Caco-2 (cell line): ENCODE measurements at regions of chr3 and their contacts with region 1.

Region 1: GRCh38 chr3:141561426-141562034 is 74.7 kb downstream of the RASA2 start:
- DNase-seq: peak in 1 of 2 experiments; percentile 69
- H3K4me3 ChIP-seq: no peak overlapping the region
- H3K4me3 Mint-ChIP-seq: no peak overlapping the region
- H3K27ac Mint-ChIP-seq: no peak overlapping the region
- H3K4me1 ChIP-seq: peaks cover 8% of the 10 kb centered on the region
- H3K4me1 Mint-ChIP-seq: no peaks in the 10 kb centered on the region
- H3K27me3 ChIP-seq: no peaks in the 10 kb centered on the region
- H3K27me3 Mint-ChIP-seq: no peaks in the 10 kb centered on the region
- CTCF ChIP-seq: peak; percentile 87 to 96

Region 2: GRCh38 chr3:141303481-141304223 is 257.9 kb before region 1 on chr3:
- CTCF ChIA-PET with region 1: no interaction called
- POLR2A ChIA-PET with region 1: no interaction called
- intact Hi-C with region 1: loop called (anchors 2 kb)
- DNase-seq: peak; percentile 56 to 77
- H3K4me3 ChIP-seq: no peak overlapping the region
- H3K4me3 Mint-ChIP-seq: no peak overlapping the region
- H3K27ac Mint-ChIP-seq: no peak overlapping the region
- H3K4me1 ChIP-seq: no peaks in the 10 kb centered on the region; the same call in 1 of the 2 replicates
- H3K4me1 Mint-ChIP-seq: no peaks in the 10 kb centered on the region
- H3K27me3 ChIP-seq: no peaks in the 10 kb centered on the region
- H3K27me3 Mint-ChIP-seq: no peaks in the 10 kb centered on the region
- CTCF ChIP-seq: peak; percentile 61 to 68

Region 3: GRCh38 chr3:141360888-141361598 is 200.5 kb before region 1 on chr3:
- CTCF ChIA-PET with region 1: interaction called, 4 read pairs
- POLR2A ChIA-PET with region 1: no interaction called
- intact Hi-C with region 1: loop called (anchors 2 kb)
- DNase-seq: peak; percentile 87 to 88
- H3K4me3 ChIP-seq: no peak overlapping the region
- H3K4me3 Mint-ChIP-seq: no peak overlapping the region
- H3K27ac Mint-ChIP-seq: peak overlapping the region; percentile 87
- H3K4me1 ChIP-seq: peaks cover 25% of the 10 kb centered on the region
- H3K4me1 Mint-ChIP-seq: peaks cover 26% of the 10 kb centered on the region
- H3K27me3 ChIP-seq: no peaks in the 10 kb centered on the region
- H3K27me3 Mint-ChIP-seq: no peaks in the 10 kb centered on the region
- CTCF ChIP-seq: peak; percentile 56 to 76

Region 4: DNA sequence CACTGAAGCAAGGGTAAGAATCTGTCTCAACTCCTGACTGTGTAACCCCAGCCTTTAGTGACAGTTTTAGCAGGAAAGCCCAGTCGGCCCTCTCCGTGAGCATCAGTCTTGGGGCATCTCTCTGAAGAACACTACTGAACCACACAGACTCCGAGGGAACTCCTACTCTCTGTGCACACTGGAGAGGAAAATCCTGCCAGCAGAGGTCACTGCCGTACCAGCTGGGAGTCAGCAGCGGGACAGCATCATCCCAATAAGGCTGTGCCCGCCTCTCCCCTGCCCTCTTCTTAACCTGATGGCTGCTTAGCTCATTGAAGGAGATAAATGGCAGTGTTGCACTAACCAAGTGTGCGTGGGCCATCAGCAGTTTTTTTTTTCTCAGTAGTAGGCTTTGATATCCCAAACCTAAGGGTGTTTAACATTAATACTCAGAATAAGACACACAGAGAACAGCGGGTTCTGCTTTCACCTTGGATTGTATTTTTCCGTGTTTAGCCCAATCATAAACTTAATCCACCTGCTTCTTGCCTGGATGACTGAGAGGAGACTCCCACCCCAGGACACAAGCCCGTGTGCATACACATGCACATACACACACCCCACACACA is 101.3 kb before region 1 on chr3:
- CTCF ChIA-PET with region 1: interaction called, 14 read pairs
- POLR2A ChIA-PET with region 1: no interaction called
- intact Hi-C with region 1: loop called (anchors 1 kb)
- DNase-seq: peak; percentile 86 to 91
- H3K4me3 ChIP-seq: no peak overlapping the region
- H3K4me3 Mint-ChIP-seq: no peak overlapping the region
- H3K27ac Mint-ChIP-seq: no peak overlapping the region
- H3K4me1 ChIP-seq: peaks cover 34% of the 10 kb centered on the region
- H3K4me1 Mint-ChIP-seq: peaks cover 37% of the 10 kb centered on the region
- H3K27me3 ChIP-seq: no peaks in the 10 kb centered on the region
- H3K27me3 Mint-ChIP-seq: no peaks in the 10 kb centered on the region
- CTCF ChIP-seq: peak; percentile 80 to 91

Region 5: GRCh38 chr3:141477224-141477623 is 84.3 kb before region 1 on chr3:
- CTCF ChIA-PET with region 1: no interaction called
- POLR2A ChIA-PET with region 1: no interaction called
- intact Hi-C with region 1: loop called (anchors 1 kb)
- DNase-seq: no peak
- H3K4me3 ChIP-seq: no peak overlapping the region
- H3K4me3 Mint-ChIP-seq: no peak overlapping the region
- H3K27ac Mint-ChIP-seq: no peak overlapping the region
- H3K4me1 ChIP-seq: peaks cover 17% of the 10 kb centered on the region
- H3K4me1 Mint-ChIP-seq: peaks cover 22% of the 10 kb centered on the region
- H3K27me3 ChIP-seq: no peaks in the 10 kb centered on the region
- H3K27me3 Mint-ChIP-seq: no peaks in the 10 kb centered on the region
- CTCF ChIP-seq: no peak

Region 6: GRCh38 chr3:141487521-141488252 is 73.8 kb before region 1 on chr3:
- CTCF ChIA-PET with region 1: no interaction called
- POLR2A ChIA-PET with region 1: interaction called, 4 read pairs
- intact Hi-C with region 1: loop called (anchors 1 kb)
- DNase-seq: peak; percentile 84 to 86
- H3K4me3 ChIP-seq: peak overlapping the region; percentile 82
- H3K4me3 Mint-ChIP-seq: peak overlapping the region; percentile 90
- H3K27ac Mint-ChIP-seq: peak overlapping the region; percentile 74
- H3K4me1 ChIP-seq: peaks cover 34% of the 10 kb centered on the region
- H3K4me1 Mint-ChIP-seq: peaks cover 59% of the 10 kb centered on the region
- H3K27me3 ChIP-seq: no peaks in the 10 kb centered on the region
- H3K27me3 Mint-ChIP-seq: no peaks in the 10 kb centered on the region
- CTCF ChIP-seq: peak in 1 of 2 experiments; percentile 3

Region 7: DNA sequence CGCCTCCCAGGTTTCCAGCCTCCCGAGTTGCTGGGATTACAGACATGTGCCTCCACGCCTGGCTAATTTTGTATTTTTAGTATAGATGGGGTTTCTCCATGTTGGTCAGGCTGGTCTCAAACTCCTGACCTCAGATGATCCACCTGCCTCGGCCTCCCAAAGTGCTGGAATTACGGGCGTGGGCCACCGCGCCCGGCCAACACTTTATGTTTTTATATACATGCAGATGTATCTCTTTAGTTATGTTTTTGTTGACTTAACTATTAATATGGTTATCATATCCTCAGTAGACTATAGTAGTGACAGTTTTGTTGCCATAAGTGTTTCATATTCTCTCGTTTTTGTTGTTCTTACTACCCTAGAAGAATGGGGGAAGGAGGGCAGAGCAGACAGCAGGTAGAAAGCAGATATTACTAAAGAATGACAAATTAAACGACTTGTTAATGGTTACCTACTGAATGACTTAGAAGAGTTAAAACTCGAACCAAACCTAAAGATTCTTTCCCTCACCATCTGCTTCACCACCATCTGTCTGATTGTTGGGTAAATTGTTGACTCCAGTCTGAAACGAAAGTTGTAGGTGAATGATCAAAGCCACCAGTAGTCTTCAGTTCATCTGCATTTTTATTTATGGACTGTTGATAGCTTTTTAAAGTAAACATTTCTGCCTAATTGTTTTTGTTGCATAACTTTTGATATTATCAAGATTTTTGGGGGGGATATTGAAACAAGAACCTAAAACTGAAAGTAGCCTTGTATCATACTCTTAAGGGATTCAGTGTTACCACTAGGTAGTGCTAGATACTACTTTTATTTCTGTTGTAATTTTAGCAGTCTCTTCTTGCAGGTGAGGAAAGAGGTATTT is 14.6 kb after region 1 on chr3:
- CTCF ChIA-PET with region 1: no interaction called
- POLR2A ChIA-PET with region 1: no interaction called
- intact Hi-C with region 1: no loop called
- DNase-seq: no peak
- H3K4me3 ChIP-seq: no peak overlapping the region
- H3K4me3 Mint-ChIP-seq: no peak overlapping the region
- H3K27ac Mint-ChIP-seq: peak overlapping the region; percentile 3
- H3K4me1 ChIP-seq: no peaks in the 10 kb centered on the region
- H3K4me1 Mint-ChIP-seq: no peaks in the 10 kb centered on the region
- H3K27me3 ChIP-seq: no peaks in the 10 kb centered on the region
- H3K27me3 Mint-ChIP-seq: no peaks in the 10 kb centered on the region
- CTCF ChIP-seq: peak; percentile 35 to 52